ENCODE measurements at regions of chr7 and their contacts with region 1.

Region 1: DNA sequence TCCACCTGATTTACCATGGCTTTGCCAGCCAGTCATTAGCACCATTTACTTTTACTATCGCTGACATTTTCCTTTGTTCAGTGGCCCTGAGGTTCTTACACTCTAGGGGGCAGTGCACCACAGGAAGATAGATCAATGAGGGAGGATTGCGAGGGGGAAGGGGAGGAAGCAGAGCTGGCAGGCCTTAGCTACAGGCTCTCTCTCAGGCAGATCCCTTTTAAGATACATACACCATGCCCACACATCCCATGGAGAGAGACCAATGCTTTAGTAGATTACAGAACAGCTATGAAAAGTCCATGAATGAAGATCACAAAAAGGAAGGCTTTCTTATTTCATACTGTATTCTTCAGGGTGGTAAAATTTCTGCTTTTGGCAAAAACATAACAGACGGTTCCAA is 47.4 kb downstream of the DENND11 start:
- DNase-seq: peak; percentile 75
- ATAC-seq: peak; percentile 72
- H3K4me3 ChIP-seq: no peak overlapping the region
- H3K4me3 Mint-ChIP-seq: no peak overlapping the region
- H3K27ac ChIP-seq: peak overlapping the region in 1 of 2 donors; percentile 7
- H3K27ac Mint-ChIP-seq: peak overlapping the region; percentile 51
- H3K4me1 ChIP-seq: peaks cover 2 to 7% of the 10 kb centered on the region in 2 donors
- H3K4me1 Mint-ChIP-seq: peaks cover 13% of the 10 kb centered on the region
- H3K27me3 ChIP-seq: no peaks in the 10 kb centered on the region
- H3K27me3 Mint-ChIP-seq: no peaks in the 10 kb centered on the region
- CTCF ChIP-seq: peak; percentile 72

Region 2: GRCh38 chr7:140810830-140811556 is 843.6 kb before region 1 on chr7:
- CTCF ChIA-PET with region 1: interaction called, 46 read pairs
- POLR2A ChIA-PET with region 1: no interaction called
- intact Hi-C with region 1: loop called (anchors 1 kb)
- DNase-seq: peak; percentile 82
- ATAC-seq: peak; percentile 73
- H3K4me3 ChIP-seq: no peak overlapping the region
- H3K4me3 Mint-ChIP-seq: no peak overlapping the region
- H3K27ac ChIP-seq: no peak overlapping the region
- H3K27ac Mint-ChIP-seq: peak overlapping the region; percentile 17
- H3K4me1 ChIP-seq: no peaks in the 10 kb centered on the region
- H3K4me1 Mint-ChIP-seq: peaks cover 1% of the 10 kb centered on the region
- H3K27me3 ChIP-seq: no peaks in the 10 kb centered on the region
- H3K27me3 Mint-ChIP-seq: no peaks in the 10 kb centered on the region
- CTCF ChIP-seq: peak; percentile 82

Region 3: GRCh38 chr7:141071260-141071854 is 583.2 kb before region 1 on chr7:
- CTCF ChIA-PET with region 1: interaction called, 3 read pairs
- POLR2A ChIA-PET with region 1: no interaction called
- intact Hi-C with region 1: loop called (anchors 2 kb)
- DNase-seq: peak; percentile 20
- ATAC-seq: no peak
- H3K4me3 ChIP-seq: peak overlapping the region in 4 of 5 experiments; percentile 13 to 50 (median 34)
- H3K4me3 Mint-ChIP-seq: peak overlapping the region; percentile 85
- H3K27ac ChIP-seq: no peak overlapping the region
- H3K27ac Mint-ChIP-seq: no peak overlapping the region
- H3K4me1 ChIP-seq: peaks cover 32 to 35% of the 10 kb centered on the region in 2 donors
- H3K4me1 Mint-ChIP-seq: peaks cover 25% of the 10 kb centered on the region
- H3K27me3 ChIP-seq: peaks cover 0 to 48% (median 32%) of the 10 kb centered on the region in 4 experiments
- H3K27me3 Mint-ChIP-seq: peaks cover 41% of the 10 kb centered on the region
- CTCF ChIP-seq: no peak

Region 4: GRCh38 chr7:141551094-141551781 is 103.3 kb before region 1 on chr7 and contains the start of gene AGK:
- CTCF ChIA-PET with region 1: interaction called, 7 read pairs
- POLR2A ChIA-PET with region 1: no interaction called
- intact Hi-C with region 1: loop called (anchors 5 kb)
- DNase-seq: peak; percentile 75
- ATAC-seq: peak; percentile 87
- H3K4me3 ChIP-seq: peak within 1 kb of the TSS; percentile 49 to 80 (median 75)
- H3K4me3 Mint-ChIP-seq: peak within 1 kb of the TSS; percentile 87
- H3K27ac ChIP-seq: peak within 1 kb of the TSS in 1 of 2 donors; percentile 78
- H3K27ac Mint-ChIP-seq: peak within 1 kb of the TSS; percentile 75
- H3K4me1 ChIP-seq: peaks cover 12% of the 10 kb centered on the region in 2 donors
- H3K4me1 Mint-ChIP-seq: peaks cover 29% of the 10 kb centered on the region
- H3K27me3 ChIP-seq: no peaks in the 10 kb centered on the region
- H3K27me3 Mint-ChIP-seq: no peaks in the 10 kb centered on the region
- CTCF ChIP-seq: no peak
- total RNA-seq, gene AGK: 26.1 and 30.2 TPM in 2 replicates

Region 5: DNA sequence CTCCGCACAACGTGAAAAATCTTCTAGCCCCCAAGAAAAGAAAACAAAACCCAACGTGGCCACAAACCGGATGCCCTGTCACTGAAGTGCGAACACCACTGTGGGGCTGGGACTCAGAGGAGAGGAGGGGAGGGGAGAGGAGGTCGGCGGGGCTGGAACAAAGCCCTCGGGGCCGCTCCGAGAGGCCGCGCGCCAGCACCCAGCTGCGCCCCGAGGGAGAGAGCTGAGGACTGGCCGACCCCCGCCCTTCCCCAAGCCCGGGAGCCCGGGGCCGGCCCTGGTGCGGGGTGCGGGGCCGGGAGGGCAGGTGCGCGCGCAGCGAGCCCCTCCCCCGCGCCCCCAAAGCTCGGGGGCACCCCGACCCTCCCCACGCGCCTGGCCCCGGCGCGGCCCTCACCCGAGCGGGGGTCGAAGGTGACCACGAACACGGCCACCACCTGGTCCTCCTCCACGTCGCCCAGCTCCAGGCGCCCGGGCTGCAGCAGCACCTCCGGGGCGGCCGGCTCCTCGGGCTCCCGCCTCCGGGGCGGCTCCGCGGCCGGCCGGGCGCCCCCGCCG is 47.0 kb after region 1 on chr7:
- CTCF ChIA-PET with region 1: interaction called, 32 read pairs
- POLR2A ChIA-PET with region 1: no interaction called
- intact Hi-C with region 1: loop called (anchors 2 kb)
- DNase-seq: peak; percentile 83
- ATAC-seq: peak; percentile 86
- H3K4me3 ChIP-seq: peak overlapping the region in 4 of 5 experiments; percentile 47 to 78 (median 64)
- H3K4me3 Mint-ChIP-seq: peak overlapping the region; percentile 84
- H3K27ac ChIP-seq: peak overlapping the region; percentile 52 to 87
- H3K27ac Mint-ChIP-seq: peak overlapping the region; percentile 79
- H3K4me1 ChIP-seq: peaks cover 35 to 38% of the 10 kb centered on the region in 2 donors
- H3K4me1 Mint-ChIP-seq: peaks cover 56% of the 10 kb centered on the region
- H3K27me3 ChIP-seq: no peaks in the 10 kb centered on the region
- H3K27me3 Mint-ChIP-seq: no peaks in the 10 kb centered on the region
- CTCF ChIP-seq: no peak

Region 6: GRCh38 chr7:141737834-141738591 is 83.5 kb after region 1 on chr7 and contains the start of gene SSBP1:
- CTCF ChIA-PET with region 1: interaction called, 66 read pairs
- POLR2A ChIA-PET with region 1: interaction called, 3 read pairs
- intact Hi-C with region 1: loop called (anchors 1 kb)
- DNase-seq: peak; percentile 97
- ATAC-seq: peak; percentile 86
- H3K4me3 ChIP-seq: peak within 1 kb of the TSS; percentile 66 to 93 (median 90)
- H3K4me3 Mint-ChIP-seq: peak within 1 kb of the TSS; percentile 95
- H3K27ac ChIP-seq: peak within 1 kb of the TSS; percentile 84 to 92
- H3K27ac Mint-ChIP-seq: peak within 1 kb of the TSS; percentile 97
- H3K4me1 ChIP-seq: peaks cover 19 to 20% of the 10 kb centered on the region in 2 donors
- H3K4me1 Mint-ChIP-seq: peaks cover 37% of the 10 kb centered on the region
- H3K27me3 ChIP-seq: no peaks in the 10 kb centered on the region
- H3K27me3 Mint-ChIP-seq: no peaks in the 10 kb centered on the region
- CTCF ChIP-seq: peak; percentile 92
- total RNA-seq, gene SSBP1: 89.1 and 93.6 TPM in 2 replicates

Region 7: DNA sequence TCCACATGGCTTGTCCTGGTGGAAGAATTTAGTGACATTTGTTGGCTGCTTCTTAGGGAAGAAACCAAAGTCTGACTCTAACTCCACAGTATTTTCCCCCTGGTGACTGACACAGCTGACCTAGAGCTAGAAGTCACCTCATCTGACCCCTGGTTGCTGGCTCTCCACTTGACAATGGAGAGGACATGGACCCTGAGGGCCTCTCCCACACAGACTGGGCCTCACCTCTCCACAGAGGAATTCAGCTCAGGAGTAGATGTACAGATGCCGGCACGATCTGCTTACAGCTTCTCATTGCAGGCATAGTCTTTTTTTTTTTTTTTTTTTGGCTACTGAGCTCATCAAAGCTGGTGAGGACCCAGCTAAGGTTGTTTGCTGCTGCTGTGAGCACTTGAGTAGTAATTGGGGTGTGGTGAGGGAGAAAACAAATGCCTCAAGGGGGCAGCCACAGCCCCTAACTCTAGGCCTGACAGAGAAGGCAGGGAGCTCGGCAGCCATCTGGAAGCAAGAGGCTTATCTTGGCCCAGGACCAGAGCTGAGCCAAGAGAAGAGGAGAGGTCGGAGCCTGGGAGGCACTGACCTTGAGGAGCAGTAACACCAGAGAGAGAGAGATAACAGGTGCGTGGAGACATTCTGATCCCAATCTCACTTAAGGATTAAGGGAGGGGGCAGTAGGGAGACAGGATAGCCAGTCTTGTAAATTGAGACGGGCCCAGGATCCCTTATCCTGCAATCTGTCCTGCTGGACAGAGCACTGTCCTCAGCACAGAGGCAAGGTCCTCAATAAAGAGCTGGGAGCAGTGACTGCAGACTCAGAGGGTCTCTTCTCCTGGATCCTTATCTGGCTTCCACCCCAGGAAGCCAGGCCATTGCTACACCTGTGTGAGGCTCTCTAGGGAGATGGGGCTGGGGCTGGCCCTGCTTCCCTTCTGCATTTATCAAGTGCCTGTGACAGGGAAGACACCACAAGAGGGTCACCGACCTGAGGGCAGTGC is 593.9 kb after region 1 on chr7:
- CTCF ChIA-PET with region 1: no interaction called
- POLR2A ChIA-PET with region 1: no interaction called
- intact Hi-C with region 1: no loop called
- DNase-seq: no peak
- ATAC-seq: no peak
- H3K4me3 ChIP-seq: no peak overlapping the region
- H3K4me3 Mint-ChIP-seq: no peak overlapping the region
- H3K27ac ChIP-seq: no peak overlapping the region
- H3K27ac Mint-ChIP-seq: no peak overlapping the region
- H3K4me1 ChIP-seq: no peaks in the 10 kb centered on the region
- H3K4me1 Mint-ChIP-seq: no peaks in the 10 kb centered on the region
- H3K27me3 ChIP-seq: no peaks in the 10 kb centered on the region
- H3K27me3 Mint-ChIP-seq: peaks cover 3% of the 10 kb centered on the region
- CTCF ChIP-seq: no peak

Measured in B cell (primary cell).